Common myeloid progenitor, CD34-positive (primary cell): ENCODE measurements at regions of chr7 and their contacts with region 1.

Region 1: DNA sequence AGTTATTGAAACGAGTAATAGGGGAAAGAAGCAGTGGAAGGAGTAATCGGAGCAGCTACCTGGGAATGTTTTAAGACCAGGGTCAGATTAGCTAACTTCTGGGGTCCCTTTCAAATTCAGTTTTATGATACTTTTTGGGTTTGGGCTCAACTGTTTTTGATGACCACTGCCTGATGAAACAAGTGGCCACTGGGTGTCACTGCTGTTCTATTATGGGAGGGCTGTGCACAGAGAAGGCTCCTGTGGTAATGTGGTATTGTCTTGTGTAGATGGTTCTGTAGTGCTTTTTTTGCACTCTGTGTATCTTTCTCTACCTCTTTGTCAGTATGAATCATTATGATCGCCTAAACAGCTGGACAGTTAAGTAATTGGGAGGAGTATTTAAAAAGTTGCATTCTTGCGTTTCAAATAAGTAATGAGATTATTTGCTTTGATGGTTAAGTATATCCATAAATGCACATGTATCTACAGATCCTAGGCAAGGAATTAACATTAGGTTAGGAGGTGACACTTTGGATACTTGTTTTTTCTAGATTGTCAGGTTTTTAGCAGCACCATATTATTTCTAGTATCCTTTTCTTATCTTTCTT is 128.4 kb downstream of the ABCA13 start:
- DNase-seq: peak; percentile 58 to 84 (median 80)
- H3K4me3 ChIP-seq: no peak overlapping the region
- H3K27ac ChIP-seq: no peak overlapping the region
- H3K4me1 ChIP-seq: peaks cover 0 to 13% (median 3%) of the 10 kb centered on the region in 4 experiments
- H3K27me3 ChIP-seq: no peaks in the 10 kb centered on the region

Region 2: GRCh38 chr7:48074204-48074654 is 225.4 kb before region 1 on chr7:
- CTCF ChIA-PET with region 1: no interaction called
- POLR2A ChIA-PET with region 1: no interaction called
- DNase-seq: no peak
- H3K4me3 ChIP-seq: no peak overlapping the region
- H3K27ac ChIP-seq: no peak overlapping the region
- H3K4me1 ChIP-seq: no peaks in the 10 kb centered on the region
- H3K27me3 ChIP-seq: no peaks in the 10 kb centered on the region

Region 3: DNA sequence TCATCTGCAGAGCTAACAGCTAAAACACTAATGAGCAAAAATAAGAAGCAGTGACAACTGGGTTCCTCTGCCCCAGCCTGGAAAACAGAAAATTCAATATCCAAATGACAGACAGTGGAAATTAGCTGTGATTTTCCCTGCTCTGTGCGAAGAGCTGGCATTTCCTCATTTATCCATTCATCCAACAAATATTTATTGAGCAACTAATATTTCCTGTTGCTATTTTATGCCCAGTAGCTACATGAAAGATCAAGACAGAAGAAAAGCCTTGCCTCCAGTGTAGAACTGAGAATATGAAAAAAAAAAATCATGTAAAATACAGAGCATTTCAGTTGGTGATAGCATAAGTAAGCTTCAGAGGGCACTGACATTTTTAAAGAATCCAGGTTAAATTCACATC is 12.5 kb after region 1 on chr7:
- CTCF ChIA-PET with region 1: interaction called, 22 read pairs
- POLR2A ChIA-PET with region 1: no interaction called
- DNase-seq: no peak
- H3K4me3 ChIP-seq: no peak overlapping the region
- H3K27ac ChIP-seq: no peak overlapping the region
- H3K4me1 ChIP-seq: no peaks in the 10 kb centered on the region
- H3K27me3 ChIP-seq: no peaks in the 10 kb centered on the region

Region 4: DNA sequence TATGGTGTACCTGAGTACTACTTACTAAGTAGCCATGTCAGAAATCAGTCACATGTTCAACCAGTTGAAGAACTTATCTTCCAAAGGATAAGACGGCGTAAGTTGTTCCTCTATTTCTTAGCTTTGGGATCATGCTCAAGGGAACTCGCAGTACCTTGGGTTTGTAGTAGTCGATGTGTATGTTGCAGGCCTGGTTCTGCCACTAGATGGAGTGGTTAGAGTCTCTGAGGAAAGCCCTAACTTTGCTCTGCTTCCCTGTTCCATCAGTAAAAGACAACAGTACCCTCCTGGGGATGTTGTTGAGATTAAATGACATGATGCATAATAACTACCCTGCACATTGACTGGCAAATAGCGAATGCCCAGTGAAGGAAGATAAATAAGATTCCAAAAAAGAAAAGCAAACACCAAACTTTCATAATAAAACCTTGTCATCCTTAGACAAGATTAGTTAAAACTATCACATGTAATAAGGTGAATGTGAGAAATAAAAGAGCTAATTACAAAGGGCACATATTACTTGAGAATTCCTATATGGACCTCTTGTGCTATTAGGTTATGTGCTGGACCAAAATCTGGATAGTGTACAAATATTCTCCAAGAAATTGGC is 37.4 kb after region 1 on chr7:
- CTCF ChIA-PET with region 1: interaction called, 17 read pairs
- POLR2A ChIA-PET with region 1: no interaction called
- DNase-seq: peak; percentile 9 to 50 (median 37)
- H3K4me3 ChIP-seq: no peak overlapping the region
- H3K27ac ChIP-seq: no peak overlapping the region
- H3K4me1 ChIP-seq: no peaks in the 10 kb centered on the region
- H3K27me3 ChIP-seq: no peaks in the 10 kb centered on the region

Region 5: GRCh38 chr7:48347881-48348280 is 48.2 kb after region 1 on chr7:
- CTCF ChIA-PET with region 1: no interaction called
- POLR2A ChIA-PET with region 1: no interaction called
- DNase-seq: no peak
- H3K4me3 ChIP-seq: no peak overlapping the region
- H3K27ac ChIP-seq: no peak overlapping the region
- H3K4me1 ChIP-seq: peaks cover 0 to 1% (median 0%) of the 10 kb centered on the region in 4 experiments
- H3K27me3 ChIP-seq: no peaks in the 10 kb centered on the region

Region 6: DNA sequence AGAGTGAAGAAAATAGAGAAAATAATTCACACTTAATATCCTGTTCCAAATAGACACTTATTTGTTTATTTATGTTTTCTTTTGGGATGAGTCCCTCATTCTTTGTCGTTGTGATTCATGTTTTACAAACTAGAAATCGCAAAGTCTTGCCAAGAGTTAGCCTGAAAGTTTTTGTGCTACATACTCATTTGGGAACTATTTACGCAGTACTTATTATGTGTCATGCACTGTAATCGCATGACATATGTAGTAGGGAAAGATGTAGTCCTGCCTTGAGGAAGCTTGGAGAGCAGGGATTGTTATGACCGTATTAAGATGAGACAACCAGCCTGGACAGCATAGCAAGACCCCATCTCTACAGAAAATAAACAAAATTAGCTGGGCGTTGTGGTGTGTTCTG is 60.9 kb after region 1 on chr7:
- CTCF ChIA-PET with region 1: no interaction called
- POLR2A ChIA-PET with region 1: no interaction called
- DNase-seq: no peak
- H3K4me3 ChIP-seq: no peak overlapping the region
- H3K27ac ChIP-seq: no peak overlapping the region
- H3K4me1 ChIP-seq: no peaks in the 10 kb centered on the region
- H3K27me3 ChIP-seq: no peaks in the 10 kb centered on the region

Region 7: DNA sequence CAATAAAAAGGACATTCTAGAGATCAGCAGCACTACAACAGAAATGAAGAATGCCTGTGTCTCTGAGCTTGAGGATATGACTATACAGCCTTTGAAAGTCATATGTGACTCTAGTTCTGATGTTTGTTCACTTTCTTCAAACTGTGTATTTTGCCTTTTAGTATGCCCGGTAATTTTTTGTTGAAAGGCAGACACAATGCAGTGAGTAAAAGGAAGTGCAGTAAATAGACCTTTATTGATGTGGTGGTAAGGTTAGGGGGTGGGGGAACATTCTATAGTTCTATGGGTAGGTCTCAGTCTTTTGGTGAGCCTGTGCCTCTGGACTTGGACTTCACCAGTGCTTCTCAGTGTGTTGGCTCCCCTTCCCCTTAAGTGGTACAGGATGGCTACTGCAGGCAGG is 481.2 kb after region 1 on chr7:
- CTCF ChIA-PET with region 1: no interaction called
- POLR2A ChIA-PET with region 1: no interaction called
- DNase-seq: no peak
- H3K4me3 ChIP-seq: no peak overlapping the region
- H3K27ac ChIP-seq: no peak overlapping the region
- H3K4me1 ChIP-seq: no peaks in the 10 kb centered on the region
- H3K27me3 ChIP-seq: no peaks in the 10 kb centered on the region

Region 8: GRCh38 chr7:48875045-48875916 is 575.6 kb after region 1 on chr7:
- CTCF ChIA-PET with region 1: interaction called, 47 read pairs
- POLR2A ChIA-PET with region 1: no interaction called
- DNase-seq: peak; percentile 40 to 65 (median 62)
- H3K4me3 ChIP-seq: no peak overlapping the region
- H3K27ac ChIP-seq: no peak overlapping the region
- H3K4me1 ChIP-seq: no peaks in the 10 kb centered on the region
- H3K27me3 ChIP-seq: peaks cover 0 to 3% (median 0%) of the 10 kb centered on the region in 5 experiments

Region 9: GRCh38 chr7:49791088-49791741 is 1491.5 kb after region 1 on chr7:
- CTCF ChIA-PET with region 1: interaction called, 10 read pairs
- POLR2A ChIA-PET with region 1: no interaction called
- DNase-seq: peak; percentile 64 to 83 (median 79)
- H3K4me3 ChIP-seq: no peak overlapping the region
- H3K27ac ChIP-seq: no peak overlapping the region
- H3K4me1 ChIP-seq: no peaks in the 10 kb centered on the region
- H3K27me3 ChIP-seq: peaks cover 0 to 7% (median 3%) of the 10 kb centered on the region in 5 experiments